Activated CD4-positive, alpha-beta T cell treated with anti-CD3 and anti-CD28 coated beads for 36 hours (primary cell): ENCODE measurements at regions of chr2 and their contacts with region 1.

Region 1: DNA sequence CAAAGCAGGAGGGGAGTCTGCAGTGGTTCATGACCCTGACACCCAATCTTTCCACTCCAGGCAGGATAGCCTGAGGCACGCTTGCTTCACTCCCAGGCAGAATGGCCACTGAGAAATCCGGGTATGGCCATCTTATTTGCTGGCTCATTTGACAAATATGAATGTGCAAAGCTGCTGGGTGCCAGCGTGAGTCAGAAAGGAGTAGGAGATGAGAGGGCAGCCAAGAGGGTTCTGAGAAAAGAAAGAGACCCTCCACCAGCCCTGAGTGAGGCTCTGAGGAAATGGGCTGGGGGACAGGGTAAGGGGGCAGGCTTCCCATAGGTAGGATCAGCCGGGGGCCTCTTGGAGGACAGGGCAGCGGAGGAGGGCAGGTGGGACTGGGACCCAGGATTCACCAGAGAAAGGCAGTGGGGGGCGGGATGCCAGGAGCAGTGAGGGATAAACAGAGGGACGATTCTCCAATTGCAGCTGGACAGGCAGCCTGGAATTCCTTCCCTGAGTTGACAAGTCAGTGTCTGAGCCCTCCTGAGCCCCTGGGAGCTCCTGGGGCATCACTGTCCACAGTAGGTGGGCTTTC is 15.2 kb downstream of the RAMP1 start:
- DNase-seq: no peak
- ATAC-seq: no peak
- H3K4me3 Mint-ChIP-seq: no peak overlapping the region
- H3K27ac Mint-ChIP-seq: no peak overlapping the region
- H3K4me1 Mint-ChIP-seq: peaks cover 3% of the 10 kb centered on the region
- H3K27me3 Mint-ChIP-seq: peaks cover 8% of the 10 kb centered on the region

Region 2: GRCh38 chr2:236607451-236608187 is 1267.1 kb before region 1 on chr2:
- CTCF ChIA-PET with region 1: no interaction called
- POLR2A ChIA-PET with region 1: no interaction called
- intact Hi-C with region 1: loop called in 1 of 2 experiments (anchors 5 kb)
- DNase-seq: no peak
- ATAC-seq: no peak
- H3K4me3 Mint-ChIP-seq: no peak overlapping the region
- H3K27ac Mint-ChIP-seq: no peak overlapping the region
- H3K4me1 Mint-ChIP-seq: peaks cover 2% of the 10 kb centered on the region
- H3K27me3 Mint-ChIP-seq: peaks cover 16% of the 10 kb centered on the region

Region 3: GRCh38 chr2:237529452-237530402 is 344.9 kb before region 1 on chr2:
- CTCF ChIA-PET with region 1: no interaction called
- POLR2A ChIA-PET with region 1: no interaction called
- intact Hi-C with region 1: no loop called
- DNase-seq: no peak
- ATAC-seq: no peak
- H3K4me3 Mint-ChIP-seq: no peak overlapping the region
- H3K27ac Mint-ChIP-seq: no peak overlapping the region
- H3K4me1 Mint-ChIP-seq: no peaks in the 10 kb centered on the region
- H3K27me3 Mint-ChIP-seq: no peaks in the 10 kb centered on the region

Region 4: GRCh38 chr2:237674731-237675276 is 199.9 kb before region 1 on chr2:
- CTCF ChIA-PET with region 1: no interaction called
- POLR2A ChIA-PET with region 1: no interaction called
- intact Hi-C with region 1: no loop called
- DNase-seq: peak; percentile 86
- ATAC-seq: peak; percentile 61
- H3K4me3 Mint-ChIP-seq: peak overlapping the region; percentile 74
- H3K27ac Mint-ChIP-seq: peak overlapping the region; percentile 90
- H3K4me1 Mint-ChIP-seq: peaks cover 49% of the 10 kb centered on the region
- H3K27me3 Mint-ChIP-seq: no peaks in the 10 kb centered on the region

Region 5: DNA sequence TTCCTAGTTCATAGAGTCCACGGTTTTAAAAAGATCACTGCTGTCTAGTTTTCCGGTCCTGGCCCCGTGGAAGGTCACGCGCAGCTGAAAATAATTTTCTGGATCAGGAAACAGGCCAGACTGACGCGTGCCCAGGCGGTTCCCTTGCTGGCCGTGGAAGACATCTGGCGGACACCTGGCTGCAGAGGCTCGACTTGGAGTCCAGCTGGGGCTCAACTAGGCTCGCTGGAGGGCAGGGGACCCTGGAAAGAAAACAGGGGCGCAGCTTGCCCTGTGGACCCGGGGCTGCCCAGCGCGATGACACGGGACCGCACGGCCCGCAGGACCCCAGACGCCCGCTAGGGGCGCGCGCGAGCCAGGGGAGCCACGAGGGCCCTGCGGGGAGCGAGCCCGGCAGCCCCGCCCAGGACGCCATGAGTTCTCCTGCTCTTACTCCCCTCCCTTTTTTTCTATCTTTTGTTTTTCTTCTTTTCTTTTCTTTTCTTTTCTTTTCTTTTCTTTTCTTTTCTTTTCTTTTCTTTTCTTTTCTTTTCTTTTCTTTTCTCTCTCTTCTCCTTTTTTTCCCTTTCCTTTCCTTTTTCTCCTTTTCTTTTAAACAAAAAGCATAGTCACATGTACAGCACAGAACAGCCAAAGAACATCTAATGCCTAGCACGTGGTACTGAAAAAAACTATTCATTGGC is 48.9 kb after region 1 on chr2:
- CTCF ChIA-PET with region 1: no interaction called
- POLR2A ChIA-PET with region 1: no interaction called
- intact Hi-C with region 1: no loop called
- DNase-seq: peak; percentile 89
- ATAC-seq: peak; percentile 98
- H3K4me3 Mint-ChIP-seq: no peak overlapping the region
- H3K27ac Mint-ChIP-seq: no peak overlapping the region
- H3K4me1 Mint-ChIP-seq: peaks cover 20% of the 10 kb centered on the region
- H3K27me3 Mint-ChIP-seq: no peaks in the 10 kb centered on the region

Region 6: GRCh38 chr2:238231251-238231793 is 356.6 kb after region 1 on chr2:
- CTCF ChIA-PET with region 1: no interaction called
- POLR2A ChIA-PET with region 1: no interaction called
- intact Hi-C with region 1: no loop called
- DNase-seq: peak; percentile 89
- ATAC-seq: peak; percentile 90
- H3K4me3 Mint-ChIP-seq: peak overlapping the region; percentile 74
- H3K27ac Mint-ChIP-seq: peak overlapping the region; percentile 62
- H3K4me1 Mint-ChIP-seq: peaks cover 23% of the 10 kb centered on the region
- H3K27me3 Mint-ChIP-seq: peaks cover 14% of the 10 kb centered on the region